ENCODE measurements at regions of chr3 and their contacts with region 1.

Region 1: DNA sequence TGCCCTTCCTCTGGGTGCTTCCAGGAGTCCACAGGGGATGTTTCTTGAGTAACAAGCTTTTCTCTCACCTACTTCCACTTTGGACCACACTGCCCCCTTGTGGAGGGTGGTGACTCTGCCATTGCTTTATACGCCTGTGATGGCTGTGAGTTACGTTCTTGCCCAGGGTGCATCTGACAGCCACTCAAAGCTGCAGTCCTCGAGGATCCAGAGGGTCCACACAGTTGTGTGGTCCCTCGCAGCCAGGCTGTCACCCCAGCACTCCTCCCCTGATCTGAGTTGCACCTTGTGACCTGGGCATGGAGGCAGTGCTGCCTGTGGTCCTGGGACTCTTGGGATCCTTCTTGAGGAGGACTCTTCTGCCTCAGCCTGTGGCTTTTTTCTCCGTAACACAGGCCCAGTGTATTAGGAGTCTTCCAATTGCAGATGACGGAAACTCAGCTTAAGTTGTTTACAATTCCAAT is 23.4 kb downstream of the FOXL2 start:
- DNase-seq: peak; percentile 79

Region 2: GRCh38 chr3:138694287-138695007 is 229.1 kb before region 1 on chr3:
- CTCF ChIA-PET with region 1: interaction called, 17 read pairs
- POLR2A ChIA-PET with region 1: interaction called, 3 read pairs
- DNase-seq: no peak

Region 3: GRCh38 chr3:138850151-138850550 is 73.4 kb before region 1 on chr3:
- CTCF ChIA-PET with region 1: no interaction called
- POLR2A ChIA-PET with region 1: no interaction called
- DNase-seq: no peak

Region 4: DNA sequence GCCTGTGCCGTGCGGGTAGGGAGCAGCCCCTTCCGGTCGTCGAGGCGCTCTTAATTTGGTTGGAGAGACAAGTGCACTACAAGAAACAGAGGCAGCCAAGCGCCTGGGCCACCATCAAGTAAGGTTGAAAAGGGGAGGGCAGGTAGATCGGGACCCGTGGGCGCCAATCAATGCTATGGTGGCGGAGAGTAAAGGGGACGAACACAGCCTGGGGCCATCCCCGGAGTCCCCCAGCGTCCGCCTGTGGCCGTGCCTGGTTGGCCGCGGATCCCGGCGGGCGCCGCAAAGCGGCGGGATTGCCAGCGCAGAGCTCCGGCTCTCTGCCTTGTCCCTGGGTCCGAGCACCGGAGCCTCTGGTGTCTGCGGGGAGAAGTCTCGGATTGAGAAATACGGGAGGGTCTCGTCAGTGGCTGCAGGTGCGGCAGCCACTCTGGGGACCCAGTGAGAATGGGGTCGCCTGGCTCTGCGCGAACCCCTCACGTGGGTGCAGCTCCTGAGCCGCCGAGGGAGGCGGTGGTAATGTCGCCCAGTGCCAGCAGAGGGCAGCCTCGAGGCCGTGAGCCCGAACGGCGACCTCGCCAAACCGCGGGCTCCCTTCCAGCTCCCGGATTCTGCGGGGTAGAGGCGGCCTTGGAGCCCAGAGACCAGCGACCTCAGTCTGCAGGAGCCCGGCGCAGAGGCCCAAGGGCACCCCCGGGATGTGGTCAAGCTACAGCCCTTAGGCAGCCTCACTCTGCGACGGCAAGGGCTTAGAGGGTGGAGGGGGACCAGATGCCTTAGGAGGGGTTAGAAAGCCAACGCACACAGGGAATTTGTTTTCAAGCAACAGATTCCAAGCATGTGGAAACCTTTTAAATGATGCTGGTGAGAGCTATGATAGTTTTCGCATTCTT is 12.5 kb after region 1 on chr3:
- CTCF ChIA-PET with region 1: interaction called, 25 read pairs
- POLR2A ChIA-PET with region 1: interaction called, 6 read pairs
- DNase-seq: peak; percentile 87